Sigmoid colon (tissue), 7 donors: ENCODE measurements at regions of chr1 and their contacts with region 1.

Region 1: DNA sequence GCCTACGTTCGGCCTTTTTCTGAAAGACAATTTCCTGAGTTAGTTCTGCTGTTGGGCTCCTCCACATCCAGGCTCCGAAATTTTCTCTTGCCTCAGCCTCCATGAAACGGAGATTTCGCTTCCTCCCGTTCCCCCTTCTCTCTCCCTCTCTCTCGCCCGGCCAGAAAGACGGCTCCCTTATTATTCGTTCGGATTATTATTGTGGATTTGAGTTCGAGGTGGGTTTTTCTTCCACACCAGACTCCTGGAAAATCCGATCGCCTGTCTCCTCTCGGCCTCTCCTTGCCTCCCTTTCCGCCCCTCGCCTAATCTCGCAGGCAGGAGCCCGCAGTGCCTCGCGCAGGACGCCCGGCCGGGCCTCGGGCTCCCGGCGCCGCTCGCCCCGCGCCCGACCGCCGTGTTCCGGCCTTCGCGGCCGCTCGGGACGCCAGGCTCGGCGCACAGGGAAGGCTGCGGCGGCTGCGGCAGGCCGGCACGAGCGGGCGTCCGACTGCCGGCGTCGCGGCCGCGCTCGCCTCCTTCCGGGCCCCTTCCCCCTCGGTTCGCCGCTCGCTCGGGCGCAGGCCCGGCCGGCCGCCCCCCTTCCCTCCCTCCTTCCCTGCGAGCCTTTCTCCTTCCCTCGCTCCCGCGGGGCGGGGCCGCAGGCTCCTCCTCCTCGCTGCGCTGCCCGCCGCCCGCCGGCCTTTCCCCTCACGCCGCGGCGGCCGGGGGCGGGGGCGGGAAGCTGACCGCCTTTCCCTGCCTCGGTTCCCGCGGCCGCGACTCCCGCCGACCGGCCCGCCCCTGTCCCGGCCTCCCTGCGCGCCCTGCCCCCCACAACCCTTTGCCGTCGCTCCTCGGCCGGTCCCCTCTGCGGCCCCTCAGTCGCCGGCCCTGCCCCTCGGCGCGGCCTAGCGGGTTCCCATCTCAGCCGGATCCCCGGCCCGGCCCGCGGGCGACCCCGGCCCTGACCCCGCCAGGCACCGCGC is at the start of gene ARHGEF11:
- DNase-seq: peak; percentile 95
- H3K4me3 ChIP-seq: peak within 1 kb of the TSS; percentile 48 to 79 (median 70)
- H3K27ac ChIP-seq: peak within 1 kb of the TSS; percentile 88 to 90 (median 89)
- H3K4me1 ChIP-seq: peaks cover 0 to 53% (median 43%) of the 10 kb centered on the region in 4 donors
- H3K27me3 ChIP-seq: no peaks in the 10 kb centered on the region
- CTCF ChIP-seq: no peak
- EP300 ChIP-seq: no peak
- POLR2A ChIP-seq: no peak
- total RNA-seq, gene ARHGEF11: 27.5 to 46.8 (median 33.6) TPM

Region 2: DNA sequence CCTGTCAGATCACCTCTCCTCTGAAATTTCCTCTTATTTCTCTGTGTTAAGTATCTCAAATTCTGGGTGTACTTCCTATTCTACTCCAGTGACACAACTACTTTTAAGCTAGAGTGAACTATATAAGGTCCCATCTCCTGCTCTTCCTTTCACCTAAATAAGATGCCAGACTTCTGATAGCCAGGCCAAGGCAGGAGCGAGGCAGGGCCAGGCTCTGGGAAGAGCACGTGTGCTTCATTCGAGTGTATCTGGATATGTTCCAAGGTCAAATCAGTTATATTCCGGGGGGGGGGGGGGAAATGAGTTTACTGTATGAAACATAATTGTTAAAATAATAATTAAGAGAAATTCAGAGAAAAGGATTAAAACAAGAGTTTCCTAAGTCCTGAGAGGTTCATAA is 65.0 kb before region 1 on chr1:
- intact Hi-C with region 1: no loop called
- DNase-seq: no peak
- H3K4me3 ChIP-seq: no peak overlapping the region
- H3K27ac ChIP-seq: no peak overlapping the region
- H3K4me1 ChIP-seq: no peaks in the 10 kb centered on the region
- H3K27me3 ChIP-seq: no peaks in the 10 kb centered on the region
- CTCF ChIP-seq: no peak
- EP300 ChIP-seq: no peak
- POLR2A ChIP-seq: no peak

Region 3: GRCh38 chr1:157000686-157001085 is 44.8 kb before region 1 on chr1:
- intact Hi-C with region 1: no loop called
- DNase-seq: no peak
- H3K4me3 ChIP-seq: no peak overlapping the region
- H3K27ac ChIP-seq: no peak overlapping the region
- H3K4me1 ChIP-seq: peaks cover 0 to 47% (median 35%) of the 10 kb centered on the region in 4 donors
- H3K27me3 ChIP-seq: no peaks in the 10 kb centered on the region
- CTCF ChIP-seq: no peak
- EP300 ChIP-seq: no peak
- POLR2A ChIP-seq: no peak

Region 4: DNA sequence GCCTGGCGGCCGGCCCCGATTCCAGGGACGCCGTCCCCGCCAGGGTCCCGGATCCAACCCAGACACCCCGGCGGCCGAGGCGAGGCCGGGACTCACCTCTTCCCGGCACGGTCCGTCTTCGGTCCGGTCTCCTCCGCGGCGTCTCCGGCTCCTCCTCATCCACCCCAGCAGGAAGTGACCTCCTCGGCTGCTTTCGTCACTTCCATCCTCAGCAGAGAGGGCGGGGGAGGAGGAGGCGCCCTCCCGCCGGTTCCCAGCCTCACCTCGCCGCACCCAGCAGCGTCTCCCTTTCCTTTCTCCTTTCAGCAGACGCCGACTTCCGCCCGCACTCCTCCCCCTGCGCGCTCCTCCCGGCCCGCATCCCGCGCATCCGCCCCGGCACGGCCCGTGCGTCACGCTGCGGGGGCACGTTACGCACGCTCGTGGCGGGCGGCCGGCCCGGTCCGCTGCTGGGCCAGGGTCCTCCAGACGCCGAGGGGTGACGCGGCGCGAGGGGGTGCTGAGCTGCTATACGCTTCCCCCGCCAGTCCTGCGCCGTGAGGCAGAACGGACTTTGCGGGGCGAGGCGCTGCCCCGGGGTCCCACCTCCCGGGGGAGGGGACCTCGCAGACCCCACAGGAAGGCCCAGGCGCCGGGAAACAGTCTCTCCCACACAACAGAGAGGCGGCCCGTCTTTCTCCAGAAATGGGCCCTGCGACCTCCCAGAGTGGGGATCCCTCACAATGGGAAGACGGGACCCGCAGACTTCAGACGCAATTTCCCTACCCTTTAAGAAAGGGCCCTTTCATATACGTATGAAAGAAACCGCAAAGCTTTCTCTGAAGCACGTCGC is 92.9 kb after region 1 on chr1 and contains the start of gene ETV3:
- intact Hi-C with region 1: loop called (anchors 5 kb)
- DNase-seq: peak; percentile 97
- H3K4me3 ChIP-seq: peak within 1 kb of the TSS; percentile 80 to 96 (median 92)
- H3K27ac ChIP-seq: peak within 1 kb of the TSS; percentile 96 to 99 (median 98)
- H3K4me1 ChIP-seq: peaks cover 0 to 27% (median 22%) of the 10 kb centered on the region in 4 donors
- H3K27me3 ChIP-seq: no peaks in the 10 kb centered on the region
- CTCF ChIP-seq: no peak
- EP300 ChIP-seq: peak in 1 of 4 donors; percentile 0
- POLR2A ChIP-seq: peak; percentile 83 to 93
- total RNA-seq, gene ETV3: 14.1 to 20.2 (median 17.6) TPM